Activated CD8-positive, alpha-beta memory T cell treated with anti-CD3 and anti-CD28 coated beads, Interleukin-2, amount 10 ng/mL, durations not matched to agents 7 days and 5 days (primary cell): ENCODE measurements at regions of chr1 and their contacts with region 1.

Region 1: GRCh38 chr1:87953732-87954344 is 625.2 kb downstream of the LMO4 start:
- DNase-seq: peak; percentile 57
- ATAC-seq: peak; percentile 73
- H3K4me3 Mint-ChIP-seq: no peak overlapping the region
- H3K27ac Mint-ChIP-seq: no peak overlapping the region
- H3K4me1 Mint-ChIP-seq: no peaks in the 10 kb centered on the region
- H3K27me3 Mint-ChIP-seq: peaks cover 23% of the 10 kb centered on the region

Region 2: DNA sequence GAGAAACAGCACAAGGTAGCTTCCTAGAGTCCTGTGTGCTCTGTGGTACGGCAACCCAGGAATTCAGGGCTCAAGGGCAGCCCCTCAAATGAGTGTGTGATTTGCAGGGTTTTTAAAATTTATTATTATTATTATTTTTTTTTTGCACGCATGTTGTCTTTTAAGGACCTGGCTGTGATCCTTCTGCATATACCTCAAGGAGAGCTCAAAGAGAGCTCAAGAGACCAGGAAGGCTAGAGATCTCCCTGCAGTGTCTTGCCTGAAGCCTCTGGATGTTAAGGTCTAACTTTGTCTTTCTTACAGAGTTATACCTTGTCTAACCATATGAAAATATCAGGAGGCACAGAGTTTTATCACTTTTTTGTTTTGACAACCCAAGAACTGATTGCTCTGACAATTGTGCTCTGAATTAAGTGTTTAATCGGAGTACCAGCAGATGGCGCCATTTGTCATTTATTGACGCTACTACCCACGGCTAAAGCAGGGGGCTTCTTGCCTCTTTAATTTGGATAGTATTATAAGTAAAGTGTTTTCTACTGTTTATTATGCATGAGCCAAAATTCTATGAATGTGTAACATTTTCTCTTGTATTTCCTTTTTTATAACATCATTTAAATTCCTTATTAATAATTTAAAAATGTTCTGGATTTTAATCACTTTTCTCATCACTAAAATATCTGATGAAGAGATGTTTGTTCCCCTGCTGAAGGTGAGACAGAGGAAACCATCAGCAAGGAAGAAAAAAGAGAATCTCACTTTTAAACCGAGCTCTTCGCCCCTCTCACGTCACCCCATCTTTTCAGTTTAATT is 660.9 kb before region 1 on chr1:
- CTCF ChIA-PET with region 1: interaction called, 28 read pairs
- DNase-seq: peak; percentile 65
- ATAC-seq: peak; percentile 57
- H3K4me3 Mint-ChIP-seq: no peak overlapping the region
- H3K27ac Mint-ChIP-seq: no peak overlapping the region
- H3K4me1 Mint-ChIP-seq: no peaks in the 10 kb centered on the region
- H3K27me3 Mint-ChIP-seq: peaks cover 8% of the 10 kb centered on the region